H1 (cell line): ENCODE measurements at regions of chr18 and their contacts with region 1.

Region 1: DNA sequence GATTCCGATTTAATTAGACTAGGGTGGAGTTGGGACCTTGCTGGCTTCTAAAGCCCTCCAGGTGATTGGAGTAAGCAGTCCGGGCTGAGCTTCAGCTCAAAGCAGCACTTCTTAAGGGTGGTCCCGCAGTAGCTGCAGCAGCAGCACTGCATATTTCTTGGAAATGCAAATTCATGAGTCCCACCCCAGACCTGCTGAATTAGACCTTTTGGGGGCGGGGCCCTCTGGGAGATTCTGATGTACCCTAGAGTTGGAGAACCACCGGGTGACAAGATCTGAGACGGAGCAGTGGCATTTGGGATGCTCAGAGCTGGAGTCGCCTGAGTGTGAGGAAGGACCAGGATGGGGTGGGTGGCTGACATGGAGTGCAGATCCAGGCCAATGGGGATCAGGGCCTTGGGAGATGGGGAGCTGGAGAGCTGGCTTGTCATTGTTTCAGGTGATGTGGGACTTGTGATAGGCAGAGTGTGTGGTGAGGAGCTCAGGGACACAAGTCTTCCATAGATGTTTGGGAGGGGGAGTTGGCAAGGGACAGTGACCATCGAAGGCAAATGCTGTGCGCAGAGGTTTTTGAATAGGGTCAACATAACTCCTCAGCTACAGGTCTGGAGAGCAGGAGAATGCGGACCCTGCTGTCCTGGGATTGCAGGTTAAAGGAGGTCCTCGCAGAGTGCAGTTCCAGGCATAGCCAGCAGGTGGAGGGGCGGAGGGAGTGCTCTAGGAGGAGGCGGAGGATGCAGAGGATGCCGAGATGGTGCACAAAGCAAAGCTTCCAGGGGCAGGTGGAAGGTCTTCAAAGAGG is 130.9 kb upstream of the RAB12 start:
- DNase-seq: peak; percentile 47 to 97
- H3K4me3 ChIP-seq: no peak overlapping the region
- H3K27ac ChIP-seq: no peak overlapping the region
- H3K4me1 ChIP-seq: no peaks in the 10 kb centered on the region
- H3K27me3 ChIP-seq: no peaks in the 10 kb centered on the region
- CTCF ChIP-seq: peak; percentile 81 to 98 (median 97)
- EP300 ChIP-seq: no peak
- POLR2A ChIP-seq: no peak
- RAD21 ChIP-seq: peak; percentile 67 to 71

Region 2: DNA sequence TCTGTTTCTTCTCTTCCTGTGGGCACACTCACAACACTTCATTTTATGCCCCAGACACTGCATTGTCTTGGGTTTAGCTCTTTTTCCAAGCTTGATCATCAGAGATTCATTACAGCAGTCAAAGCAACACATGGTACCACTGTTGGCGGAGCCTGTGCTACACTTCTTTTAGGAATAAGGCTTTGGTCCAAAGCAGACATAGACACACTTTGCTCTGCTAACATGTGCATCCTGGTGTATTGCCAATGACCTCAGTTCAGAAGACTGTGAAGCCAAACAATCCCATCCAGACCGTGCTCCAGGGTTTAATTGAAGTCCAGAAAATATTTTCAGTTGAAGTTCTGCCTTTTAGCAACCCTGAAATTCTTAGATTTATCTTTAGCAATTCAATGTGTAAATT is 223.7 kb before region 1 on chr18:
- CTCF ChIA-PET with region 1: no interaction called
- POLR2A ChIA-PET with region 1: no interaction called
- DNase-seq: no peak
- H3K4me3 ChIP-seq: no peak overlapping the region
- H3K27ac ChIP-seq: no peak overlapping the region
- H3K4me1 ChIP-seq: peaks cover 5 to 15% (median 10%) of the 10 kb centered on the region in 4 experiments
- H3K27me3 ChIP-seq: no peaks in the 10 kb centered on the region
- CTCF ChIP-seq: no peak
- EP300 ChIP-seq: no peak
- POLR2A ChIP-seq: no peak
- RAD21 ChIP-seq: no peak

Region 3: GRCh38 chr18:8450013-8450412 is 28.4 kb before region 1 on chr18:
- CTCF ChIA-PET with region 1: interaction called, 67 read pairs
- POLR2A ChIA-PET with region 1: no interaction called
- DNase-seq: peak; percentile 25 to 75
- H3K4me3 ChIP-seq: no peak overlapping the region
- H3K27ac ChIP-seq: no peak overlapping the region
- H3K4me1 ChIP-seq: no peaks in the 10 kb centered on the region
- H3K27me3 ChIP-seq: no peaks in the 10 kb centered on the region
- CTCF ChIP-seq: peak; percentile 66 to 87 (median 70)
- EP300 ChIP-seq: no peak
- POLR2A ChIP-seq: no peak
- RAD21 ChIP-seq: peak; percentile 53 to 68

Region 4: DNA sequence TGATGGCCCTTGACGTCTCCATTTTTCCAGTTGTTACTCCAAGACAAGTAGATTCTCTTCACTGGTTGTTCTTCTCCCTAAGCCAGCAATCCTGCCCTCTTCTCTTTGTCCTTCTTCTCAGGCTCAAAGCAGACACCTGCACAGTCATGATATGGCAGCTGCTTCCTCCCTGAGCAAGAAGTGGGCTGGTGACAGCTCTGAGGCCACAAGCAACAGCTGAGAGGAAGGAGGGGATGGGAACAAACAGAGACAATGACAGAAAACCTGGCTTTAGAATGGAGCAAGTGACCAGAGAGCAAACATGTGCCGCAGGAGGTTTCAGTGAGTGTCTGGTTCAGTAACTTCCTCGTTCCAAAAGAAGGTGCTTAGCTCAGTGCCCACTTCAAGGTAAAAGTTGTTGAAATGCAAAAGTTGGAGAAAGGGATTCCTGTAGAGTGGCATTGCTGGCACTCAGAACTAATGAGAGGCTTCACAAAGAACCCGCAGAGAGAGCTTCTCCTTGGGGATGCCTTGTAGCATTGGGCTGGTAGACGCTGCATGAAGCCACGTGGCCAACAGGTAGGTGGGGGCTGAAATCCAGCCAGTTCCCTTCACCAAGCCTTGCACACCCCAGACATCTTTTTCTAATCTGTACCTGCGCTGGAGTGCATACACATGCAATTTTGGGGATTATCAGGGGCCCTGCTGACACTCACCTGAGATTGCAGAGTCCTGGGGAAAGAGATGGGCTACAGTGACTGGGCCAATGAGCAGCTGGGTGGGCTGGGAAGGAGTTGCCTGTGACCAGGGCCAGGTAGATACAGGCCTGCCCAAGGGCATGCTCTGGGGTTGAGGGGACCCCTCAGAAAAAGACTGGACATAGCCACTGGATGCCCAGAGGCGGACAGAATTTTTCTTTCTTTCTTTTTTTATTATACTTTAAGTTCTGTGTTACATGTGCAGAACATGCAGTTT is 22.4 kb before region 1 on chr18:
- CTCF ChIA-PET with region 1: interaction called, 67 read pairs
- POLR2A ChIA-PET with region 1: no interaction called
- DNase-seq: no peak
- H3K4me3 ChIP-seq: no peak overlapping the region
- H3K27ac ChIP-seq: no peak overlapping the region
- H3K4me1 ChIP-seq: no peaks in the 10 kb centered on the region
- H3K27me3 ChIP-seq: no peaks in the 10 kb centered on the region
- CTCF ChIP-seq: no peak
- EP300 ChIP-seq: no peak
- POLR2A ChIP-seq: no peak
- RAD21 ChIP-seq: no peak

Region 5: GRCh38 chr18:8462651-8463185 is 15.6 kb before region 1 on chr18:
- CTCF ChIA-PET with region 1: interaction called, 82 read pairs
- POLR2A ChIA-PET with region 1: interaction called, 3 read pairs
- DNase-seq: no peak
- H3K4me3 ChIP-seq: no peak overlapping the region
- H3K27ac ChIP-seq: no peak overlapping the region
- H3K4me1 ChIP-seq: no peaks in the 10 kb centered on the region; a peak in 1 of 7 replicates
- H3K27me3 ChIP-seq: no peaks in the 10 kb centered on the region
- CTCF ChIP-seq: no peak
- EP300 ChIP-seq: no peak
- POLR2A ChIP-seq: no peak
- RAD21 ChIP-seq: no peak

Region 6: DNA sequence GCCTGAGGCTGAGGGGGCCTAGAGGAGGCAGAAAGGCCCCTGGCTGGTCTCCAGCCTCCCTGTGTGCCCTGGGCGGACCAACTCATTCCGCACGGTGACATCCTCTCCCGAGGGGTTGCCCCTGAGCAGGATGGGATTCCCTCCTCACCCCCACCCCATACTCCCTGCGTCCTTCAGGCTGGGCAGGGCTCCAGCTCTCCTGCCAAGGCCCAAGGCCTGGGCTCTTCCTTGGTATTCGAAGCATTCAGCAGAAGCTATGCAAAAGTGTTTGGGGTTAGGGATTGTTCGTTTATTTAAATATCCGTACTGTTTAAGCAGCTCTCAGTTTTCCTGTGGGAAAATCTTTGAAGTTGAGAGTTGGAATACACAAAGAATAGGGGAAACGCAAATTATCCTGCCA is 17.8 kb after region 1 on chr18:
- CTCF ChIA-PET with region 1: interaction called, 53 read pairs
- POLR2A ChIA-PET with region 1: interaction called, 3 read pairs
- DNase-seq: no peak
- H3K4me3 ChIP-seq: no peak overlapping the region
- H3K27ac ChIP-seq: no peak overlapping the region
- H3K4me1 ChIP-seq: 0 out of 7 replicates have a peak, but pooled peaks cover 0 to 3% (median 1%) of the 10 kb centered on the region in 4 experiments
- H3K27me3 ChIP-seq: no peaks in the 10 kb centered on the region; a peak in 1 of 7 replicates
- CTCF ChIP-seq: no peak
- EP300 ChIP-seq: no peak
- POLR2A ChIP-seq: no peak
- RAD21 ChIP-seq: no peak